ENCODE measurements at regions of chr11 and their contacts with region 1.

Region 1: DNA sequence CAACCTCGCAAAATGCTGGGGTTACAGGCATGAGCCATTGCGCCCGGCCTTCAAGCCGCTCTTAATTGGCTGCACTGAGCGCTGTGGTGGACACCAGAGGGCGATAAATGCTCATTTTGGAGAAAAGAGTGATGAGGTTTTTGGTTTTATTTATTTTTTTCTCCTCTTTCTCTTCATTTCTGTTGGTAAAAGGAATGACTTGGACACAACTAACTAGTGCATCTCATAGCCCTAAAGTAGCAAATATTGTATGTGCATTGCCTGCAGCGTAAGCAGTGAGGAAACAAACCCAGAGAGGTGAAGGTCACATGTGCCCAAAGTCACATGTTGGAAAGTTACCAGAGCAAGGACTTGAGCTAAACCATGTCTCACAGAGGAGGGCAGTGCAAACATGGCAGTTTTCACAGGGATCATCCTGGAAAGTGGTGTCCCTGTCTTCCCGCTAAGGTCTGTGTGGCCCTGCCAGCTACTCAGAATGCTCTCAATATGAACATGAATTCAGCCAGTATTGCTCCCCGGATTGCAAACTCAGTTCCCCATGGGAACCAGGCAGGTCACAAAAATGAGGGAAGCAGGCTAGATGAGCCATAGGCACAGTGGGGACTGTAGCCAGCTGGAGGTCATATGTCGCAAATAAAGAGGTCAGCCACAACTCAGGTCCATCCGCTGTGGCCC is 8.6 kb upstream of the CD82 start:
- DNase-seq: peak; percentile 85
- H3K4me3 Mint-ChIP-seq: no peak overlapping the region
- H3K27ac Mint-ChIP-seq: peak overlapping the region; percentile 83
- H3K4me1 Mint-ChIP-seq: peaks cover 25% of the 10 kb centered on the region
- H3K27me3 Mint-ChIP-seq: no peaks in the 10 kb centered on the region

Region 2: GRCh38 chr11:44483919-44484610 is 72.8 kb before region 1 on chr11:
- CTCF ChIA-PET with region 1: no interaction called
- intact Hi-C with region 1: no loop called
- DNase-seq: no peak
- H3K4me3 Mint-ChIP-seq: no peak overlapping the region
- H3K27ac Mint-ChIP-seq: no peak overlapping the region
- H3K4me1 Mint-ChIP-seq: no peaks in the 10 kb centered on the region
- H3K27me3 Mint-ChIP-seq: no peaks in the 10 kb centered on the region

Region 3: GRCh38 chr11:44574610-44575287 is 17.9 kb after region 1 on chr11:
- CTCF ChIA-PET with region 1: interaction called, 18 read pairs
- intact Hi-C with region 1: no loop called
- DNase-seq: peak; percentile 84
- H3K4me3 Mint-ChIP-seq: peak overlapping the region; percentile 68
- H3K27ac Mint-ChIP-seq: peak overlapping the region; percentile 96
- H3K4me1 Mint-ChIP-seq: peaks cover 93% of the 10 kb centered on the region
- H3K27me3 Mint-ChIP-seq: no peaks in the 10 kb centered on the region

Region 4: DNA sequence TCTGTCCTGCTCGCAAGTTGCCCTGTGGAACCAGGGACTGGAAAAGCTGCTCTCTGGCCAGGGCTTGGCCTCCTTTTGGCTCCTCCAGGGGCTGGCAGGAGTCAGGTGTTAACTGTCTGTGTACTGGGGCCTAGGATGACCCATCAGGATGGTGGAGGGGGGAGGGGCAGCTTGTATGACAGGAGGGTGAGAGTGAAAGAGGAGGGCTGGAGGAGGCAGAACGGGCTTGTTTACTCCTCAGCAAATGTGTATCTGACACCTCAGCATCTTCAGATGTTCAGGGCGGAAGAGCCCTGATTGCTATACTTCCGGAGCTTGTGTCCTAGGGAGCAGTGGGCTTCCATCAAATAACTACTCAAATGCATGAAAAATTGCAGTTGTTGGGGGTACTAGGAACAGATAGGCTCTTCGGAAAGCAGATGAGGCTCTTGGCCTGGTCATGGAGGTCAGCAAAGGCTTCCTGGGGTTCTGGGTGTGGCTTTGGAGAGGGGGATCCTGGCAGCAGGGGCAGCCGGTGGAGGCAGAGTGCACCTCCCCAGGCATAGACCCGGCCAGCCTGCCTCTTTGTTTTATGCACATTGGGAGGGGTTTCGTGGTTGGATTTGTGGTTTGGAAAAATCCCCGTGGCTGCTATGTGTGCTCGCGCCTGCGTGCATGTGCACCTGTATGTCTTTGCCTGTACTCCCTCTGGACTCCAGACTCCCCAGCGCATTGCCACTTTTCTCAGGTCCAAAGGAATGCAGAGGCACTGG is 39.8 kb after region 1 on chr11:
- CTCF ChIA-PET with region 1: interaction called, 10 read pairs
- intact Hi-C with region 1: no loop called
- DNase-seq: peak; percentile 89
- H3K4me3 Mint-ChIP-seq: peak overlapping the region; percentile 39
- H3K27ac Mint-ChIP-seq: peak overlapping the region; percentile 88
- H3K4me1 Mint-ChIP-seq: peaks cover 81% of the 10 kb centered on the region
- H3K27me3 Mint-ChIP-seq: no peaks in the 10 kb centered on the region

Region 5: GRCh38 chr11:44634401-44635281 is 77.8 kb after region 1 on chr11:
- CTCF ChIA-PET with region 1: interaction called, 366 read pairs
- intact Hi-C with region 1: loop called (anchors 1 kb)
- DNase-seq: no peak
- H3K4me3 Mint-ChIP-seq: no peak overlapping the region
- H3K27ac Mint-ChIP-seq: no peak overlapping the region
- H3K4me1 Mint-ChIP-seq: peaks cover 11% of the 10 kb centered on the region
- H3K27me3 Mint-ChIP-seq: peaks cover 2% of the 10 kb centered on the region

Region 6: DNA sequence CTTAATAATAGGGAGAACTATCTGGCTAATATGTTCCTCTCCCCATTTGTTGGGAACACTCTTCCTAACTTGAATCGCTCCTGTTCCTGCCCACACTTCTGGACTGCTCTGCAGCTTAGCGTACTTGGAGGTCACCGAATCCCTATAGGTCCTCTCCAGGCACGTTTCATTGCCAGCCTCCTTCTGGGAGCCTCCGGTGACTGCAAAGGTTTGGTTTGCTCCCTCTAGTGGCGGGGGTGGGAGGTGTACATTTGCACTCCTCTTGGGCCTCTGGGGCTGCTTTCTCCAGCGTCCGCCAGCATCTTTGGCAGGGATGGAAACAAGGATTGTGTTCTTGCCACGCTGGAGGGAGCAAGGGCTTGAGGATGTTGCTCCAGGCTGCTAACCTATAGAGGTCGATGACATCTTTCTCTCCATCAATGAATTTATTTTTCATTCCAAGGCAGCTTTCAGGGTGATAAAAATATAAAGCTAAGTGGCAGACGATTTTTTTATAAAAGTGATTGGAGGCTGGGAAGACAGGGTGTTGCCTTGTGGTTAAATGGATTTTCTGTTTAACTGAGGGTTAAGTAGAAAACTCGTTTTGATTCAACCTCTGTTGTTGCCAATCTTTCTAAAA is 218.6 kb after region 1 on chr11:
- CTCF ChIA-PET with region 1: interaction called, 10 read pairs
- intact Hi-C with region 1: loop called (anchors 1 kb)
- DNase-seq: peak; percentile 82
- H3K4me3 Mint-ChIP-seq: no peak overlapping the region
- H3K27ac Mint-ChIP-seq: no peak overlapping the region
- H3K4me1 Mint-ChIP-seq: peaks cover 7% of the 10 kb centered on the region
- H3K27me3 Mint-ChIP-seq: no peaks in the 10 kb centered on the region

Region 7: GRCh38 chr11:44868455-44869421 is 311.9 kb after region 1 on chr11:
- CTCF ChIA-PET with region 1: no interaction called
- intact Hi-C with region 1: no loop called
- DNase-seq: no peak
- H3K4me3 Mint-ChIP-seq: no peak overlapping the region
- H3K27ac Mint-ChIP-seq: no peak overlapping the region
- H3K4me1 Mint-ChIP-seq: no peaks in the 10 kb centered on the region
- H3K27me3 Mint-ChIP-seq: no peaks in the 10 kb centered on the region

Region 8: DNA sequence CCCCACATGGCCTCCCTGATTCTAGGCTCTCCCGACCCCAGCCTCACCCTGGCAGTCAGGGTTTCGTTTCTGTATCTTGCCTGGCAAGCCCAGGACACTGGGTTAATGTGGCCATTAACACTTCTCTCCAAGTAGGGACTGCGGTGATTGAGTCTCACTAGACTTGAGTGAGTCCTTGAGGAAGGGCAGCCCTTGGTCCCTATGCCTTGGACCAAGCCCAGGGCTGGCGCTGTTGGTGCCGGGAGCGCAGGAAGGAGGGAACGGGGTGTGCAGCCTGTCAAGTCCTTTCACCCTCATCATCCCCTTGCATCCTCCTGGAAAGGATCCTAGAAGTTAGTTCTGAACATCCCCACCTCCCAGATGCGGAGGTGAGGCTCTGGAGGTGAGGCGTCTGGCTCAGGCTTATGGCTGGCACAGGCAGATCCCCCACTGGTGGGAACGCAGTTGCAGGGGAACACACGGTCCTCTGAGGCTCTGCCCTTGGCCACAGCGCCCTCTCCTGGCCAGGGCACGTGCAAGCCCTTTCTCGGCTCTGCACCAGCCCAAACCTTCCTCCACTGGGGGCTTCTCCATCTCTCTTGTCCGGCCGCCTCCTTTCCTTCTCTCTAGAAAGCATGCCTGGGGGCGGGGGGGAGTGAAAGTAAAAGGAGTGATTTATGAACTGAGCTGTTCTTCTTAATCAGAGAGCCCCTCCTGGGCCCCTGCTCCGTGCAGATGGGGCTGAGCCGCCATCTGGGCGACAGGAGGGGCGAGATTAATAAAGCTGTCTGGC is 337.2 kb after region 1 on chr11:
- CTCF ChIA-PET with region 1: interaction called, 8 read pairs
- intact Hi-C with region 1: loop called (anchors 2 kb)
- DNase-seq: peak; percentile 73
- H3K4me3 Mint-ChIP-seq: no peak overlapping the region
- H3K27ac Mint-ChIP-seq: no peak overlapping the region
- H3K4me1 Mint-ChIP-seq: no peaks in the 10 kb centered on the region
- H3K27me3 Mint-ChIP-seq: no peaks in the 10 kb centered on the region